Ovary (tissue), 10 donors: ENCODE measurements at regions of chr19 and their contacts with region 1.

Region 1: GRCh38 chr19:46392243-46392801 is 21.0 kb downstream of the CCDC8 start:
- DNase-seq: peak in 3 of 5 donors; percentile 21 to 44 (median 21)
- H3K4me3 ChIP-seq: no peak overlapping the region
- H3K27ac ChIP-seq: peak overlapping the region in 1 of 2 donors; percentile 42
- H3K4me1 ChIP-seq: peaks cover 2% of the 10 kb centered on the region
- H3K27me3 ChIP-seq: no peaks in the 10 kb centered on the region
- CTCF ChIP-seq: no peak
- EP300 ChIP-seq: no peak
- POLR2A ChIP-seq: no peak

Region 2: DNA sequence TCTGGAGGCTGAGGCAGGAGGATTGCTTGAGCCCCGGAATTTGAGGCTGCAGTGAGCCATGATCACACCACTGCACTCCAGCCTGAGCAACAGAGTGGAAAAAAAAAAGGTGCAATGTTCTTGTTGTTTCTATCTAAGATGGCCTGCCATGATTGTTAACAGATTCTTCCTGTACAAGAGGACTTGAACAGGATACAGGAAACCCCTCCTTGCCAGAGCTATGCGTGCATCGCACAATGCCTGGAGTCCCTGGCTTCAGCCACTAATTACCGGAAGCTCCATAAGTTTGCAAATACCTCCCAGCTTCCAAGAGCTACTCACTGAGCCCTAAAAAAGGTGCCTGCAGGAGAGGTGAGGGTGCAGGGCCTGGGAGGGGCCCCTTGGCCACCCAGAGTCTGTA is 108.6 kb before region 1 on chr19:
- intact Hi-C with region 1: loop called in 3 of 4 experiments (anchors 5 to 10 kb)
- DNase-seq: no peak
- H3K4me3 ChIP-seq: no peak overlapping the region
- H3K27ac ChIP-seq: no peak overlapping the region
- H3K4me1 ChIP-seq: no peaks in the 10 kb centered on the region
- H3K27me3 ChIP-seq: no peaks in the 10 kb centered on the region
- CTCF ChIP-seq: no peak
- EP300 ChIP-seq: no peak
- POLR2A ChIP-seq: no peak

Region 3: GRCh38 chr19:46288896-46289588 is 103.3 kb before region 1 on chr19:
- intact Hi-C with region 1: loop called in 2 of 4 experiments (anchors 5 to 10 kb)
- DNase-seq: peak in 2 of 5 donors; percentile 29 to 33
- H3K4me3 ChIP-seq: no peak overlapping the region
- H3K27ac ChIP-seq: no peak overlapping the region
- H3K4me1 ChIP-seq: peaks cover 4% of the 10 kb centered on the region
- H3K27me3 ChIP-seq: no peaks in the 10 kb centered on the region
- CTCF ChIP-seq: no peak
- EP300 ChIP-seq: no peak
- POLR2A ChIP-seq: no peak